ENCODE measurements at regions of chr17 and their contacts with region 1.

Region 1: GRCh38 chr17:57995076-57995956 is 7.3 kb upstream of the VEZF1 start:
- DNase-seq: peak; percentile 53 to 66
- ATAC-seq: peak; percentile 88

Region 2: DNA sequence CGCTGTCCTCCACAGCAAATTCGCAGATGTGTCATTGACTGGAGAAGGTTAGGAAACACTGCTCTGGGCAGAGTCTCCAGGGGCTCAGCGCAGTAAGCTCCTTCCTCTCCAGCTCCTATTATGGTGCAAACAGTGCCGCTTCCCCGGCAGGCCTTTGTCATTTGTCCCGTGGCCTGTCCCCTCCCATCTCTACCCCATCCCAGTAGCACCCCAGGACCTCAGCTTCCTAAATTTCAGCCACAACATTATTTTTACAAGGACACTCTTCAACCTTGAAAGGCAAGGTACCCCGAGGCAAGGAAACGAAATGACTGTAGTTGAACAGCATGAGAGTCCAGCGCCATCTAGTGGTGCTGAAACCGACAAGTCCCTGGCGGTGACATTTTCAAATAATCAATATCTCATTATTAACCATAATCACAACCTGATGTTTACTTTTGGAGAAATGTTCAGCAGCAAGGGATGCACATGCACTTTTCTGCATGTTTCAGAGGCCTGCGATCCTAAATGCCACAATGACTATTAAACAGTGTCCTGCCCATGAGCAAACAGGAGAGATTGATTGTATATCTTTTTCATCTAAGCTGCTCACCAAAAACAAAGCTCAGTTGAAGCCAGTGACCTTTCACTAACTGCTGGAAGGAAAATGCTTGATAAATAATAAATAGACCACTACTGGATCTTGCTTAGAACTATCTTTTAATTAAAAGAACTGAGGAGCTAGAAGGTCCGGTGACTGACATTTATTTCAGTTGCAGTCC is 162.0 kb before region 1 on chr17:
- intact Hi-C with region 1: no loop called
- DNase-seq: peak; percentile 49 to 79
- ATAC-seq: peak; percentile 76

Region 3: GRCh38 chr17:57855391-57856035 is 139.8 kb before region 1 on chr17:
- intact Hi-C with region 1: loop called (anchors 5 to 10 kb)
- DNase-seq: no peak
- ATAC-seq: no peak

Region 4: DNA sequence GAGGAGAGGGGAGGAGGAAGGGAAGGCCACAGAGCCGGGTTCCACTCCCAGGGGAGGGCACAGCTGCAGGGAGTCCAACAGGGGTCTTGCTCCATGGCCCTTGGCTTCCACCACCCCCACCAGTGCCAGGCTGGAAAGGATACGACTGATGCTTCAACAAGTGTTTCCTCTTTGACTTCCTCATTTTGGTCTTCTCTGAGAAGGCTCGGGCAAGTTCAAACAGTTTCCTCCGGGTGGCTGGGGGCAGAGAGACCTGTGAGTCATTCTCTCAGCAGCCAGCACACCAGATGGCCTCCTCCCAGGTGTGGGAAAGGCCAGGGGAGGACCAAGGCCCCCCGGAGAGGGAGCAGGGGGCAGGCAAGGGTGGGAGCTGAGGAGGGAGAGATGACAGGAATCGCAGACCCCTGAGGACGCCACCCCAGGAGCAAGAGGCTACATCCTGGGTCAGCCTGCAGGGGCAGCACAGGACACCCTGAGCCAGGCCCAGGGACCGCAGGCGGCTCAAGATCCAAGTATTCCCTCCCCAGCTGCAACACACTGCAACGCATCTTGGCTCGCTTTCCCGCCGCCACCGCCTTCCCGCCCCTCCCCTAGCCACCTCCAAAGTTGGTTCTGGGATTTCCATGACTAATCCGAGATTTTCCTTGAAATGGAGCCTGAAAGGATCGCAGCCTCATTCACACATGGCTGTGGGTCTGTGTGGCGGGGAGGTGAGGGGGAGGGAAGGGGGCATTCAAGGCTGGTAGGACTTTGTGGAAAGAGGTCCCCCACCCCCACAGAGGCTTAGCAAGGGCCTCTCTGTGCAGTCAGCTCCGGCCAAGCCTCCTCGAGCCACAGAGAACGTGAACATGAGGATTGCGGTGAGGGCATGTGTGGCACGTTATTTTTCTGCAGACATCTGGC is 127.1 kb before region 1 on chr17:
- intact Hi-C with region 1: loop called in 1 of 2 experiments (anchors 10 kb)
- DNase-seq: peak; percentile 52 to 70
- ATAC-seq: peak; percentile 58

Region 5: DNA sequence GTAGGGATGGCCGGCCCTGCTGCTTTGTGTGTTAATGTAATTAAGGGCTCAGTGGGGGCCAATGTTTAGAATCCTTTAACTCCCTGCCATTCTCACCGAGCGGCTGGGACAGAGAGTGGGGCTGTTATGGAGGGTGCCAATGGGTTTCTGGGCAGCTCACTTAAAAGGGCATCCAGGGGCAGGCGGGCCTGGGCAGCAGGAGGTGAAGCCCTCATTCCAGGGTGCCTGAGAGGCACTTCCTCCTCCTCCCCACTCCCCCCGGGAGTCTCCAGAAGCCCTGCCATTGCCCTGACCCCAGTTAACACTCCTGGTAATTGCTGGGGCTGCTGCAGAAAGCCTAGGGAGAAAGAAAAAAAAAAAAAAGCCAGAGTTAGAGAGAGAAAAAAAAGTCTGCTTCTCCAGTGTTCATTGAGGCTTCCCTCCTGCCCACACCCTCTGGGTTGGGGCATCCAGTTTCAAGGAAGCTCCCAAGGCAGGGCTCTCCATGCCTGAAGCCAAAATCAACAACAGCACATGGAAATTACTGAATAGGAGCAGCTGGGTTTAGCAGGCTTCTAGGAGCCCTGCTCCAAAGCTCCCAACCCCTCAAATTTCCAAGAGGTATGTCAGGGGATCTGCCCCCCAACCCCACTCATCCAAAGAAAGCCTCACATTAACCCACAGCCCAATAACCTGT is 68.1 kb before region 1 on chr17:
- intact Hi-C with region 1: no loop called
- DNase-seq: peak in 1 of 2 donors; percentile 62
- ATAC-seq: peak; percentile 91

Region 6: DNA sequence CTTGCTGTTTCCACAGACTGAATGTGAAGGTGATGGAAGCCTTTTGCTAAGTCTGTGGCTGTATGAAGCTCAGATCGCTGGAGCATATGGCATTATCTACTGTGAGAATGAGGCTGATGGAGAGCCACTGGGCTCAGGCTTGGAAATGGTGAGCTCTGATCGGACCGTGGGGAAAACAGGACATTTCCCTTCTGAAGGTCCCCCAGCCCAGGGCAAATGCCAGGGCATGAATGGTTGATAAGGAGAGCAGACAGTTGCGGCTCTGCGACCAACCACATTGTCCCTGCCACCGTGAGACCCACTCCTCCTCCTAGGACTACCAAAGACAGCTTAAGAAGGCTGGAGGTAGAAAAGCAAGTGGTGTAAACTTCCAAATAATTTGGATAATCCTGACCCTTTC is 35.4 kb before region 1 on chr17:
- intact Hi-C with region 1: no loop called
- DNase-seq: no peak
- ATAC-seq: no peak